CD8-positive, alpha-beta memory T cell (primary cell): ENCODE measurements at regions of chr1 and their contacts with region 1.

Region 1: DNA sequence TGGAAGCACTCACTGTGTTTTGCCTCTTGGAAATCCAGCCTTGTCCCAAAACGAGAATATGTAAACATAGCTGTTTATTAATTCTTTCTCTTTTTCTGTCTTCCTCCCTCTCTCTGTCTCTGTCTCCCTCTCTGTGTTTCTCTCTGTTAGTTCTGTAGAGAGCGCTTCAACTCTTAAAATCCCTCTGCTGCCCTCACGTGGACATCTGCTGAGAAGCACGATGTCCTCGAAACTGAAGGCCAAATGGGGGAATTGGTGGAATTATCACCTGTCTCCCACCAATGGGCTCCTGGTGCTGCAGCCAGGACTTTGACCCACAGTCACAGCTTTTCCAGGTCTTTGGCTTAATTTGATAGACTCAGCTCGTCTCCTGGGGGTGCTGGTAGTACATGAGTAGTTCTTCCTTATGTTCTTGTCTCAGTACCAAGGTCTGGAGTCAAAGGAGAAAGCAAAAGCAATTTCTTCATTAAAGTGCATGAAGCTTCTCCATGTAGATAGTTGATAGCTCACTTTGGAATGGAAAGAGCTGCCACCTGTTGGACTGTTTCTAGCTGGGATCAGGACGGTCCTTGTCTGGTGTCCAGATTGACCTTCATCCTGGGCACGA is 5.5 kb upstream of the GBP6 start:
- DNase-seq: peak; percentile 66 to 86 (median 69)
- H3K4me3 ChIP-seq: no peak overlapping the region
- H3K4me3 Mint-ChIP-seq: peak overlapping the region in 6 of 7 donors; percentile 3 to 73 (median 26)
- H3K27ac ChIP-seq: no peak overlapping the region
- H3K27ac Mint-ChIP-seq: peak overlapping the region in 7 of 8 donors; percentile 9 to 76 (median 61)
- H3K4me1 ChIP-seq: peaks cover 17% of the 10 kb centered on the region
- H3K4me1 Mint-ChIP-seq: peaks cover 26 to 47% (median 40%) of the 10 kb centered on the region in 3 donors
- H3K27me3 ChIP-seq: no peaks in the 10 kb centered on the region
- H3K27me3 Mint-ChIP-seq: no peaks in the 10 kb centered on the region

Region 2: DNA sequence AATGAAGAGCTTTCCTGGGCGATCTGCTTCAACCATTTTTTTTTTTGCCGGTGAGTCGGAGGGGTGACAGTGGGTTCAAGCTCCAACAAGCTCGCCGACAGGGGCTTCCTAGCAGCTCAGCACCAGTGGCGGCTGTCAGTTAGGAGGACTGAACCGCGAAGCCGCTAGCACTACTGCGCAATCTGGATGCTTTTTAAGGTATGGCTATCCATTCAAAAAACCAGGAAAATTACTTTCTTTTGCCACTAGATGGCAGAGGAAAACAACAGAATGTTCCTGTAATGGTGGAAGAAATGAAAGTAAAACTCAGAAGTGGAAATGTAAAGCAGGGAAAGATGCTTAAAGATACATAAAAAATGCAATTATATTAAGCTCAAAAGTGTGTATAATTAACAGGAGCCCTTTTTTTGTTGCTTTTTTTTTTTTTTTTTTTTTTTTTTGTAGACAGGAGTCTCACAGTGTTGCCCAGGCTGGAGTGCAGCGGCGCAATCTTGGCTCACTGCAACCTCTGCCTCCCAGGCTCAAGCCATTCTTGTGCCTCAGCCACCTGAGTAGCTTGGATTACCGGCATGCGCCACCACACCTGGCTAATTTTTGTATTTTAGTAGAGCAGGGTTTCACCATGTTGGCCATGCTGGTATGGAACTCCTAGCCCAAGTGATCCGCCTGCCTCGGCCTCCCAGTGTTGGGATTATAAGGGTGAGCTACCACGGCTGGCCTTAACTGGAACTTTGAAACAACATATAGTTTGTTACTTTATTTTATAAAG is 374.4 kb before region 1 on chr1:
- CTCF ChIA-PET with region 1: interaction called, 22 read pairs
- POLR2A ChIA-PET with region 1: no interaction called
- DNase-seq: peak in 4 of 5 donors; percentile 46 to 67 (median 66)
- H3K4me3 ChIP-seq: no peak overlapping the region
- H3K4me3 Mint-ChIP-seq: peak overlapping the region; percentile 10 to 64 (median 60)
- H3K27ac ChIP-seq: no peak overlapping the region
- H3K27ac Mint-ChIP-seq: peak overlapping the region; percentile 47 to 87 (median 80)
- H3K4me1 ChIP-seq: peaks cover 19% of the 10 kb centered on the region
- H3K4me1 Mint-ChIP-seq: peaks cover 42 to 86% (median 84%) of the 10 kb centered on the region in 3 donors
- H3K27me3 ChIP-seq: no peaks in the 10 kb centered on the region
- H3K27me3 Mint-ChIP-seq: no peaks in the 10 kb centered on the region

Region 3: GRCh38 chr1:88998716-88999115 is 359.7 kb before region 1 on chr1:
- CTCF ChIA-PET with region 1: interaction called, 38 read pairs
- POLR2A ChIA-PET with region 1: no interaction called
- DNase-seq: peak in 2 of 5 donors; percentile 63 to 64
- H3K4me3 ChIP-seq: no peak overlapping the region
- H3K4me3 Mint-ChIP-seq: peak overlapping the region in 1 of 7 donors; percentile 2
- H3K27ac ChIP-seq: no peak overlapping the region
- H3K27ac Mint-ChIP-seq: no peak overlapping the region
- H3K4me1 ChIP-seq: peaks cover 26% of the 10 kb centered on the region
- H3K4me1 Mint-ChIP-seq: peaks cover 24 to 34% (median 33%) of the 10 kb centered on the region in 3 donors
- H3K27me3 ChIP-seq: no peaks in the 10 kb centered on the region
- H3K27me3 Mint-ChIP-seq: no peaks in the 10 kb centered on the region

Region 4: GRCh38 chr1:89085781-89086180 is 272.6 kb before region 1 on chr1:
- CTCF ChIA-PET with region 1: interaction called, 18 read pairs
- POLR2A ChIA-PET with region 1: no interaction called
- DNase-seq: peak; percentile 8 to 56 (median 42)
- H3K4me3 ChIP-seq: no peak overlapping the region
- H3K4me3 Mint-ChIP-seq: no peak overlapping the region
- H3K27ac ChIP-seq: no peak overlapping the region
- H3K27ac Mint-ChIP-seq: no peak overlapping the region
- H3K4me1 ChIP-seq: no peaks in the 10 kb centered on the region
- H3K4me1 Mint-ChIP-seq: peaks cover 6 to 8% (median 6%) of the 10 kb centered on the region in 3 donors
- H3K27me3 ChIP-seq: no peaks in the 10 kb centered on the region
- H3K27me3 Mint-ChIP-seq: no peaks in the 10 kb centered on the region

Region 5: DNA sequence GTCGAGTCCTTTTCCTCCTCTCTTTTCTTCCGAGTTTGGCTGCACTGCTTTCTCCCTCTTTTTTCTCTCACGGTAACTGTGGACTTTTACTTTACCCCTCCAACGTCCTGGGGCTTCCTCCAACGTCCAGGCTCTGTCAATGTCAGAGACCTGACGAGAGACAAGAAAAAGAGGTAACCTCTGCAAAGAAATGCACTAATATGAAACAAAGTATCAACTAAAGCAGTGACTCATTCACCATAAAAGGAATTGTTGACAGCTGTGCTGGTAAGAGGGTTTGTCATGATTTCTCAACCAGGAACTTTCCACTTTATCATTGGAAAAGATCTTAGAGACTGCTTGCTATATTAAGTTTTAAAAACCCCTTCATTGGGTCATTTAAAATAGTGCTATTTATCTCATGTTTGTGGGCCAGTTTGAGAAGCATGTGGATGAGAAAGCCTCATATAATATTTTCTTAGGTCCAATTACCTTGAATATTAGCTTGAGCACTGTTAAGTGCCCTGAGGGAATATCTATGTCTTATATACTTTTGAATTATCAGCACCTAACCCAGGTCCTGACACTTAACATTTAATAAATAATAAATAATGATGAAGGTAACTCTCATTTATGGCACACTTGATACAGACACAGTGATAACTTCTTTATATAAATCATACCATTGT is 232.3 kb before region 1 on chr1 and contains the start of gene GBP2:
- CTCF ChIA-PET with region 1: interaction called, 11 read pairs
- POLR2A ChIA-PET with region 1: no interaction called
- DNase-seq: peak in 2 of 5 donors; percentile 29 to 47
- H3K4me3 ChIP-seq: peak within 1 kb of the TSS; percentile 59
- H3K4me3 Mint-ChIP-seq: peak within 1 kb of the TSS; percentile 98 to 100 (median 100)
- H3K27ac ChIP-seq: peak within 1 kb of the TSS; percentile 70
- H3K27ac Mint-ChIP-seq: peak within 1 kb of the TSS; percentile 84 to 99 (median 99)
- H3K4me1 ChIP-seq: peaks cover 35% of the 10 kb centered on the region
- H3K4me1 Mint-ChIP-seq: peaks cover 54 to 75% (median 70%) of the 10 kb centered on the region in 3 donors
- H3K27me3 ChIP-seq: no peaks in the 10 kb centered on the region
- H3K27me3 Mint-ChIP-seq: no peaks in the 10 kb centered on the region
- total RNA-seq, gene GBP2: 155 to 165 TPM

Region 6: DNA sequence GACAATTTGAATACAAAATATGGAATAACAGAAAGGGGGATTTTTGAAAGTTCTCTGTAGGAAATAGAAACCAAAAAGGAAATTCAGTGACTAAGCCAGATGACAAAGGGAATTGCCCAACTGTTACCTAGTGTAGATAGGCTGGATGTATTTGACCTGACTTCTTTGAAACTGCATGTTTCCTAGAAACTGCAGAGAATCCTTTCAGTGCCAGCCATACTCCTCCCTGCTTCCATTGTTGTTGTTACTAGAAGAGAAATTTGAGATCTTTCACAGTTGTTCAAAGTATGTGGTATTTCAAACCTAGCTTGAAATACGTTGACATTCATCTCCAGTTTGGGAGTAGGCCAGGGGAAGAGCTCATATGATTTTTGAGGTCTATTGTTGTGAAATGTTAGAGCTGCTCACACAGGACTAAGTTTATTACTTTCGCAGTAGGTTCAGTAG is 84.0 kb before region 1 on chr1:
- CTCF ChIA-PET with region 1: interaction called, 23 read pairs
- POLR2A ChIA-PET with region 1: interaction called, 3 read pairs
- DNase-seq: peak in 1 of 5 donors; percentile 41
- H3K4me3 ChIP-seq: peak overlapping the region; percentile 35
- H3K4me3 Mint-ChIP-seq: peak overlapping the region; percentile 83 to 91 (median 89)
- H3K27ac ChIP-seq: peak overlapping the region; percentile 41
- H3K27ac Mint-ChIP-seq: peak overlapping the region; percentile 97 to 99 (median 98)
- H3K4me1 ChIP-seq: peaks cover 50% of the 10 kb centered on the region
- H3K4me1 Mint-ChIP-seq: peaks cover 59 to 84% (median 77%) of the 10 kb centered on the region in 3 donors
- H3K27me3 ChIP-seq: no peaks in the 10 kb centered on the region
- H3K27me3 Mint-ChIP-seq: no peaks in the 10 kb centered on the region

Region 7: GRCh38 chr1:89489047-89489729 is 130.8 kb after region 1 on chr1:
- CTCF ChIA-PET with region 1: no interaction called
- POLR2A ChIA-PET with region 1: no interaction called
- DNase-seq: no peak
- H3K4me3 ChIP-seq: no peak overlapping the region
- H3K4me3 Mint-ChIP-seq: no peak overlapping the region
- H3K27ac ChIP-seq: no peak overlapping the region
- H3K27ac Mint-ChIP-seq: no peak overlapping the region
- H3K4me1 ChIP-seq: no peaks in the 10 kb centered on the region
- H3K4me1 Mint-ChIP-seq: peaks cover 0 to 12% (median 10%) of the 10 kb centered on the region in 3 donors
- H3K27me3 ChIP-seq: no peaks in the 10 kb centered on the region
- H3K27me3 Mint-ChIP-seq: peaks cover 3 to 8% of the 10 kb centered on the region in 2 donors